ENCODE measurements at regions of chr9 and their contacts with region 1.

Region 1: DNA sequence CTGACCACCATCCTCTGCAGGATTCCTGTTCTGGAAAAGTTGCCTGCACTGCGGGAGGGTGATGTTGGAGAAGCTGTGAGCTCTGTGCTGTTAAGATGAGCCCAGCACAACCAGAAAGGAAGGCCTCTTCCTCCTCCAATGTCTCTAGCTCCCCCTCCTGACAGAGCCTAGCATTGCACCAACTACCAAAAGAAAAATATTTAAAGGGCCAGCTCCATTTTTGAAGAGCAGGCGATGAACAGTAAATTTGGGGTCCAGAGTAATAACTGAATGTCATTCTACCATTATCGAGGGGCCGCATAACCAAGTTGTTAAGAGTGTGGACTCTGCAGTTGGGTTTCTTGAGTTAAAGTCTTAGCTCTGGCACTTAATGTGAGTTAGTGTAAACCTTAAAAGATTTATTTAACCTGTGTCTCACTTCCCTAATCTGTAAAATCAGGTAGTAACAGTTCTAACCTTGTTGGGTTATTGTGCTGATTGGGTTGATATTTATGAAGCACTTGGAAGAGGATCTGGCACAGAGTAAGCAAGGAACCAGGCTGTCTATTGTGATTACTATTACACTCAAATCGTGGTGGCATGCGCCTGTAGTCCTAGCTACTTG is 3.9 kb downstream of the TEX53 start:
- DNase-seq: peak; percentile 89
- ATAC-seq: peak; percentile 83
- H3K4me3 Mint-ChIP-seq: no peak overlapping the region
- H3K27ac Mint-ChIP-seq: peak overlapping the region; percentile 14
- H3K4me1 Mint-ChIP-seq: peaks cover 26% of the 10 kb centered on the region
- H3K27me3 Mint-ChIP-seq: no peaks in the 10 kb centered on the region

Region 2: GRCh38 chr9:114108016-114108833 is 545.4 kb before region 1 on chr9:
- CTCF ChIA-PET with region 1: no interaction called
- POLR2A ChIA-PET with region 1: no interaction called
- intact Hi-C with region 1: loop called in 1 of 2 experiments (anchors 5 kb)
- DNase-seq: peak; percentile 83
- ATAC-seq: peak; percentile 92
- H3K4me3 Mint-ChIP-seq: no peak overlapping the region
- H3K27ac Mint-ChIP-seq: no peak overlapping the region
- H3K4me1 Mint-ChIP-seq: no peaks in the 10 kb centered on the region
- H3K27me3 Mint-ChIP-seq: peaks cover 10% of the 10 kb centered on the region

Region 3: DNA sequence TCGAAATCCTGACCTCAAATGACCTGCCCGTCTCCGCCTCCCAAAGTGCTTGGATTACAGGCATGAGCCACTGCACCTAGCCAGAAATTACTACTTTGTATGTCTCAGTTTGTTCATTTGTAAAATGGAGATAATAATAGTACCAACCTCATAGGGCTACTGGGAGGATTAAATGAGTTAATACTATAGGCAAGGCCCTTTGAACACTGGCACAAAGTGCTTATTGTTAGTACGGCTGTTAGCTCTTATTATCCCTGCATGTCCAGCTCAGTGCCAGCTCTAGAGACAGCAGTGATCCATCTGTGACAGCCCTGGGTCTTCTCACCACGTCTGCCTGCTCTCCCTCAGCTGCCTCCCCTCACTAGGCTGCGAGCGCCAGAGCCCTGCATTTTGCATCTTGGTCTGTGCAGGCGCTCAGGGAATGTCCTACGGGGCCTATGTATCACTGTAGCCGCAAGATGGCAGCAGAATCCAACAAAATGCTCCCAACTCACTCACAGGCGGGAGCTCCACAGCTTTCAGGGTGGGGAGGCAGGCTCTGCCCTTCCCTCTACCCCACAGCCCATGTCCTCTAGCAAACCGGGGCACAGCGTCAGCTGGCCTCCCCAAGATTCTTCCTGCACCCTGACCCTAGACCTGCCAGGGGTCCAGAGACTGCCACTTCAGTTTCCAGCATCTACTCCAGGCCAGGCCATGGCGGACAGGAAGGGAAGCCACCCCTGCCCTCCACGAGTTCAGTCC is 248.2 kb before region 1 on chr9:
- CTCF ChIA-PET with region 1: interaction called, 148 read pairs
- POLR2A ChIA-PET with region 1: interaction called, 5 read pairs
- intact Hi-C with region 1: loop called (anchors 1 kb)
- DNase-seq: peak; percentile 88
- ATAC-seq: peak; percentile 100
- H3K4me3 Mint-ChIP-seq: no peak overlapping the region
- H3K27ac Mint-ChIP-seq: no peak overlapping the region
- H3K4me1 Mint-ChIP-seq: peaks cover 6% of the 10 kb centered on the region
- H3K27me3 Mint-ChIP-seq: no peaks in the 10 kb centered on the region

Region 4: GRCh38 chr9:114434878-114435311 is 218.8 kb before region 1 on chr9:
- CTCF ChIA-PET with region 1: interaction called, 16 read pairs
- POLR2A ChIA-PET with region 1: no interaction called
- intact Hi-C with region 1: loop called in 1 of 2 experiments (anchors 1 kb)
- DNase-seq: peak; percentile 32
- ATAC-seq: no peak
- H3K4me3 Mint-ChIP-seq: no peak overlapping the region
- H3K27ac Mint-ChIP-seq: no peak overlapping the region
- H3K4me1 Mint-ChIP-seq: peaks cover 2% of the 10 kb centered on the region
- H3K27me3 Mint-ChIP-seq: no peaks in the 10 kb centered on the region

Region 5: GRCh38 chr9:114587385-114588202 is 66.1 kb before region 1 on chr9 and contains the start of gene ATP6V1G1:
- CTCF ChIA-PET with region 1: interaction called, 44 read pairs
- POLR2A ChIA-PET with region 1: interaction called, 3 read pairs
- intact Hi-C with region 1: loop called (anchors 1 kb)
- DNase-seq: peak; percentile 100
- ATAC-seq: peak; percentile 96
- H3K4me3 Mint-ChIP-seq: peak within 1 kb of the TSS; percentile 99
- H3K27ac Mint-ChIP-seq: peak within 1 kb of the TSS; percentile 100
- H3K4me1 Mint-ChIP-seq: peaks cover 44% of the 10 kb centered on the region
- H3K27me3 Mint-ChIP-seq: no peaks in the 10 kb centered on the region
- total RNA-seq, gene ATP6V1G1: 33.8 to 37.7 TPM